ENCODE measurements at regions of chr17 and their contacts with region 1.

Region 1: GRCh38 chr17:30761058-30761457 is 63.4 kb downstream of the CRLF3 start:
- DNase-seq: no peak
- ATAC-seq: no peak
- H3K4me3 ChIP-seq: no peak overlapping the region
- H3K27ac ChIP-seq: no peak overlapping the region
- H3K4me1 ChIP-seq: no peaks in the 10 kb centered on the region
- H3K27me3 ChIP-seq: no peaks in the 10 kb centered on the region
- CTCF ChIP-seq: no peak

Region 2: GRCh38 chr17:30554839-30555751 is 206.0 kb before region 1 on chr17:
- intact Hi-C with region 1: no loop called
- DNase-seq: no peak
- ATAC-seq: peak in 3 of 8 donors; percentile 30 to 53 (median 36)
- H3K4me3 ChIP-seq: no peak overlapping the region
- H3K27ac ChIP-seq: no peak overlapping the region
- H3K4me1 ChIP-seq: no peaks in the 10 kb centered on the region
- H3K27me3 ChIP-seq: no peaks in the 10 kb centered on the region
- CTCF ChIP-seq: peak in 7 of 9 donors; percentile 19 to 39 (median 35)

Region 3: GRCh38 chr17:31967648-31968047 is 1206.6 kb after region 1 on chr17:
- intact Hi-C with region 1: loop called in 2 of 10 experiments (anchors 5 to 10 kb)
- DNase-seq: no peak
- ATAC-seq: no peak
- H3K4me3 ChIP-seq: no peak overlapping the region
- H3K27ac ChIP-seq: no peak overlapping the region
- H3K4me1 ChIP-seq: no peaks in the 10 kb centered on the region
- H3K27me3 ChIP-seq: no peaks in the 10 kb centered on the region
- CTCF ChIP-seq: no peak

Measured in heart right ventricle (tissue), 16 donors.